Right ventricle myocardium inferior (tissue), 1 donor: ENCODE measurements at regions of chr10 and their contacts with region 1.

Region 1: GRCh38 chr10:93437088-93437945 is 44.8 kb downstream of the MYOF start:
- DNase-seq: peak; percentile 80
- ATAC-seq: peak; percentile 96

Region 2: DNA sequence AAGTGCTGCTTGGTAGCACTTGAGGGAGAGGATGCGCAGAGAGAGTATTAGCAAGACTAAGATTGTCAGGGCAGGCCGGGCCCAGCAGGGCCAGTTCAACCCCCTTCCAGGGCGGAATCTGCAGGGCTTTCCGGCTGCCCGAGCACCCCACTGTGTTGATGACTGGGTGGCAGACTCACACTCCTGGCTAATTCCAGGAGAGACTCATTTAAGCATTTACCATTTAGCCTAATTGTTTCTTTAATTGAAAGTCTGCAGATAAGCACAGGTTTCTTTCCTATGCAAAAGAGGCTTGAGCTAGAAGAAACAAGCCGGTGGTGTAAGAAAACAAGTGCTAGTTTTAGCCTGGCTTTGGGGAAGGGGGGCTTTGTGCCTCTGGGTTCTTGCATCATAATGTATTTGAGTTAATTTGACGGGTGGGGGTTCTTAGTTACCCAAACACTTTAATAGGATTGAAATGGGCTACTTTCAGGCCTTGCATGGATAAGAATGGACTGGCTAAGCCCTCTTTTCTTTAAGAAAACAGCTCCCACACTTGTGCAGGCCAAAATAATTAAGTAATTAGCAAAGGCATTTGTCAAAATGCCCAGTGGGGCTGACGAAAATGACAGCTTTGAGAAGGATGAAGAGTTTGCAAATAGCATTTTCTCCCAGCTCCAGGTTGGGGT is 156.5 kb before region 1 on chr10:
- intact Hi-C with region 1: no loop called
- DNase-seq: no peak
- ATAC-seq: no peak

Region 3: DNA sequence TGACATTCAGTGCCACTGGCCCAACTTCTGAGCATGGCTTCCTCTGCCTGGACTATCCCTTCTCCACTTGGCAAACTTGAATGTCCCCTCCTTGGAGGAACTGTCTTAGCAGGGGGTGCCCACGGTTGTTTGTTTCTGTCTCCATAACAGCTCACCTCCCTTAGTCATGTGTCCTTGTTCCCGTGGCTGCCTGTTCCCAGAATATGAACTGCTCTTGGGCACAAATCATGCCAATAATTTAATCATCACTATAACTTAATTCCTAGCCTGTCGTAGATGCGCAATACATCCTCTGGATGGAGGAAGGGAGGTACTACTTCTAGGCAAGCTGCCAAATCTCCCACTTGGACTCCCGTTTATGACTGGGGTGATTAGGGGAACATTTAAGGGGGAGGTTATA is 128.3 kb before region 1 on chr10:
- intact Hi-C with region 1: no loop called
- DNase-seq: no peak
- ATAC-seq: peak; percentile 37

Region 4: DNA sequence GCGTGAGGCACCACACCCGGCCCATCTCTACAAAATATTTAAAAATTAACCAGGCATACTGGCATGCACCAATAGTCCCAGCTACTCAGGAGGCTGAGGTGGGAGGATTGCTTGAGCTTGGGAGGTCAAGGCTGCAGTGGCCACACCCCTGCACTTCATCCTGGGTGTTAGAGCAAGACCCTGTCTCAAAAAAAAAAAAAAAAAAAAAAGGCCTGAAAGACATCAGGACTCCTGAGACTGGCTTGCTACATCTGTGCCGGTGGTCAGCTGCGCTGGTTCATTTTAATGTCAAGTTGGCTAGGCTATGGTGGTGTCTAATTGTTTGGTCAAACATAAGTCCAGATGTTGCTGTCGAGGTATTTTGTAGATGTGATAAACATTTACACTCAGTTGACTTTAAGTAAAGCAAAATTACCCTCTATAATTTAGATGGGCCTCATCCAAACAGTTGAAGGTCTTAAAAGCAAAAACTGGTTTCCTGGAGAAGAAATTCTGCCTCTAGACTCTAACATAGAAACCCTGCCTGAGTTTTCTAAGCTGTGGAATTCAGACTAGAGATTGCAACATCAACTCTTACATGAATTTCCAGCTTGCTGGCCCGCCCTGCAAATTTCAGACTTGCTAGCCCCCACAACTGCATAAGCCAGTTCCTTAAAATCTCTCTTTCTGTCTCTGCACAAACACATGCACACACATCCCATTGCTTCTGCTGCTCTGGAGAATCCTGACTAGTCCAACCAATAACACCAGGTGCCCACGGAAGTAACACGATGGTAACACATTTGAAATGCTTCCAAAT is 26.6 kb after region 1 on chr10:
- intact Hi-C with region 1: loop called (anchors 2 kb)
- DNase-seq: no peak
- ATAC-seq: peak; percentile 32

Region 5: GRCh38 chr10:93482145-93482834 is 45.0 kb after region 1 on chr10 and contains the start of gene MYOF:
- intact Hi-C with region 1: loop called (anchors 2 kb)
- DNase-seq: no peak
- ATAC-seq: peak; percentile 88
- total RNA-seq, gene MYOF: 34.4 TPM

Region 6: GRCh38 chr10:93496322-93497041 is 59.2 kb after region 1 on chr10 and contains the start of gene CEP55:
- intact Hi-C with region 1: no loop called
- DNase-seq: peak; percentile 97
- ATAC-seq: peak; percentile 100
- total RNA-seq, gene CEP55: 1.4 TPM